ENCODE measurements at regions of chr18 and their contacts with region 1.

Region 1: GRCh38 chr18:45589356-45590035 is 25.8 kb upstream of the SLC14A2 start:
- DNase-seq: no peak
- H3K4me3 ChIP-seq: no peak overlapping the region
- H3K27ac ChIP-seq: peak overlapping the region; percentile 27 to 55
- H3K4me1 ChIP-seq: peaks cover 4% of the 10 kb centered on the region
- H3K27me3 ChIP-seq: no peaks in the 10 kb centered on the region
- CTCF ChIP-seq: no peak
- POLR2A ChIP-seq: no peak

Region 2: GRCh38 chr18:45526114-45526841 is 63.2 kb before region 1 on chr18:
- intact Hi-C with region 1: loop called (anchors 5 kb)
- DNase-seq: no peak
- H3K4me3 ChIP-seq: no peak overlapping the region
- H3K27ac ChIP-seq: peak overlapping the region in 1 of 2 donors; percentile 11
- H3K4me1 ChIP-seq: no peaks in the 10 kb centered on the region
- H3K27me3 ChIP-seq: no peaks in the 10 kb centered on the region
- CTCF ChIP-seq: peak in 1 of 4 experiments; percentile 20
- POLR2A ChIP-seq: no peak

Region 3: GRCh38 chr18:45637546-45638327 is 48.2 kb after region 1 on chr18:
- intact Hi-C with region 1: loop called (anchors 5 kb)
- DNase-seq: no peak
- H3K4me3 ChIP-seq: no peak overlapping the region
- H3K27ac ChIP-seq: peak overlapping the region; percentile 63 to 67
- H3K4me1 ChIP-seq: no peaks in the 10 kb centered on the region
- H3K27me3 ChIP-seq: no peaks in the 10 kb centered on the region
- CTCF ChIP-seq: no peak
- POLR2A ChIP-seq: no peak

Region 4: DNA sequence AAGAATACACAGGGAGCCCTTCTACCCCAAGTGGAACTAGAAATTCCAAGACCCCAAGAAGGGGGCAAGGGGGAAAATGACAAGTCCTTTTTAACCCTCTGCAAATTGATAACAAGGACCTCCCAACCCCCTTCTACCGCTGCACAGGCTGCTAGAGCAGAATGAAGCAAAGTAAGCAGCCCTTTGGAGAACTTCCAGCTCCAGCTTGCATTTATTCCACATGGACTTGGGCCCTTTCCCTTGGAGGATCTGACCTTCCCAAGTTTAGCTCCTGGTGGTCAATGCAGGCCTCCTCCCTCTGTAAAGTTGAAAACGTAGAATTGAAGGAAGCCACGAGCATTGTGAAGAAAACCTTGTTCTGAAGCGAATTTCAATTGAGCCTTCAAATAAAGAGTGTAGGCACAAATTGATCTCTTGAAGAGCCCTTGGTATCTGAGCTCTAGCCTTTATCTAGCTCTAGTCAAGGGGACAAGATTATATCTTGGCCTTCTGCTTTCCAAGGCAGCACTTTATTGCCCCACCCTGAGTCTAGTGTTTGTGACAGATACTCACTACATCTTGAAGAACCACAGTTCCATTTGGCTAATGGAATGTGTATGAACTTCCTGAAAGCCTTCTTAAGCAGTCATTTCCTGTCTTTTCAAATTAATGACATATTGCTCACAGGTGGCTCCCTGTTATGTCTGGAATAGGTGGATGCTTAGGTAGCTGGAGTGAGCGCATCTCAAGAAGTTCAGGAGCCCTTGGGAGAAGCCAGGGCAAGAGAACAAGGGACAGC is 63.0 kb after region 1 on chr18:
- intact Hi-C with region 1: no loop called
- DNase-seq: no peak
- H3K4me3 ChIP-seq: no peak overlapping the region
- H3K27ac ChIP-seq: no peak overlapping the region
- H3K4me1 ChIP-seq: no peaks in the 10 kb centered on the region
- H3K27me3 ChIP-seq: no peaks in the 10 kb centered on the region
- CTCF ChIP-seq: no peak
- POLR2A ChIP-seq: no peak

Region 5: DNA sequence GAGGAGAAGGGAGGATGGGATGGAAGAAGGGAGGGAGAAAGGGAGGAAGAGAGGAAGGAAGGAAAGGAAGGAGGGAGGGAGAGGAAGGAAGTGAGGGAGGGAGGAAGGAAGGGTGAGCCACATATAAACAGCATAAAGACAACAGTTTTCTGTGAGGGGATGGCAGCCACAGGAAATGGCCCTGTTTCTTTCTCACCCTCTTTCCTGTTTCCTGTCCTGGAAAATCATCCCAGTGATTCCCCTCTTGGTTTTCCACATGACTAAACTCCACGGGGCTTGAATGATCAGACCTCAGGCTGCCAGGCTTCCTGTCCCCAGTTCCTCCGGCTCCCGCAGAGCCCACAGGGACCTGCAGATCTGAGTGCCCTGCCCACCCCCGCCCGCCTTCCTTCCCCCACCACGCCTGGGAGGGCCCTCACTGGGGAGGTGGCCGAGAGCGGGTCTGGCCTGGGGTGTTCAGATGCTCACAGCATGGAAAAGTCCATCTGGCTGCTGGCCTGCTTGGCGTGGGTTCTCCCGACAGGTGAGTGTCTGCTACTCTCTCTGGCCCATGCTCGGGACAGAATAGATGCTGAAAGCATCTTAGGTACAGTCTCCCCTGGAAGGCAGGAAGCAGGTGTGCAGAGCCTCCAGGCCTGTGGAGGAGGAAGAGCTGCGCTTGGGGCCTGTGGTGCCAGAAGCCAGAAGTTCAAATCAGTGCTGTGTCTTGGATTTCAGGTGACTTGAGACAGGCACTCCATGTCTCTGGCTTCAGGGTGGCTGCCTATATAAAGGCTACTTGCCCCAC is 236.0 kb after region 1 on chr18 and contains the start of gene SIGLEC15:
- intact Hi-C with region 1: no loop called
- DNase-seq: no peak
- H3K4me3 ChIP-seq: no peak within 1 kb of the TSS
- H3K27ac ChIP-seq: no peak within 1 kb of the TSS
- H3K4me1 ChIP-seq: peaks cover 6% of the 10 kb centered on the region
- H3K27me3 ChIP-seq: no peaks in the 10 kb centered on the region
- CTCF ChIP-seq: no peak
- POLR2A ChIP-seq: no peak
- total RNA-seq, gene SIGLEC15: 0.91 TPM in 1 of 2 donors, not detected in the other

Measured in prostate gland (tissue), 2 donors.